CD14-positive monocyte (primary cell): ENCODE measurements at regions of chr3 and their contacts with region 1.

Region 1: DNA sequence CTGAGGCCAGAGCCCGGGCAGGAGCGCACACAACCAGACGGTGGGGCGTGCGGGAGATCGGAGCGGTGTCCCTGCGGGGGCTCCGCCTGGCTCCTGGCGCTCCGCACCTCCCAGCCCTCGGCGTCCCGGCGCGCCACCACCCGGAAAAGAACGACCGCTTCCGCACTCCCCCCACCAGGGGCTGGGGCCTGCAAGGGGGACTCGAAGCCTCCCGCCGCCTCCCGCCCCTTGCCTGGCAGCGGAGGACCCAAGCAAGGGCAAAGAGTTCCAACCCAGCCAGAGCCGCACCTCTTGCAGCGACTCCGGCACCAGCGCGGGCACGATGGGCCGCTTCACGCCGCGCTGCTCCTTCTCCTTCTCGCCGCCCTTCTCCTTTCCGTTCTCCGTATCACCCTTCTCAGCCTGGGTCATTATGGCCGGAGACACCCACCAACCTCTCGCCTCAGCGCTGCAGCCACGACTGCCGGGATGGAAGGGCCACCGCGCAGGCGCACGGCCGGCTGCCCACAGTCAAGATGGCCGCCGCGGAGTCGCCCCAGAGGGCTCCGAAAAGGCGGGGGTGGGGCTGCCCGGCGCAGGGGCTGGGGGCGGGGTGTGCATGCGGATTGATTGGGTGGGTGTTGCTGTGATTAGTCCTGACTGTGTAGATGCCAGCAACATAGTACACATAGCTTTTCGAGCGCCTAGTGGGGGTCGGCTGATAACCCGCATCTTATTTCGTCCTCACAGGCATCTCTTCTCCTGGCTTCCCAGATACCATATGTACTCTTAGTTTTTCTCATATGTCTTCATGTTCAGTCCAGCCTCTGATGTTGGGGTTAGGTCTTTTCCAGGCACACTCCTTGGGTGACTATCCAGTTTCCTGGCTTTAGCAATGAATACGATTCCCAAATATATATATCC is at the start of gene ACTR8:
- DNase-seq: peak; percentile 78 to 83 (median 83)
- H3K4me3 ChIP-seq: peak within 1 kb of the TSS; percentile 87 to 96 (median 91)
- H3K4me3 Mint-ChIP-seq: peak within 1 kb of the TSS; percentile 97 to 100
- H3K27ac ChIP-seq: peak within 1 kb of the TSS; percentile 83 to 84
- H3K27ac Mint-ChIP-seq: peak within 1 kb of the TSS; percentile 92 to 99 (median 96)
- H3K4me1 ChIP-seq: peaks cover 13 to 17% of the 10 kb centered on the region in 2 donors
- H3K4me1 Mint-ChIP-seq: peaks cover 16% of the 10 kb centered on the region
- H3K27me3 ChIP-seq: no peaks in the 10 kb centered on the region
- H3K27me3 Mint-ChIP-seq: peaks cover 0 to 7% (median 2%) of the 10 kb centered on the region in 3 donors
- CTCF ChIP-seq: no peak
- polyA plus RNA-seq, gene ACTR8: 8.3 to 12.2 (median 10.7) TPM

Region 2: DNA sequence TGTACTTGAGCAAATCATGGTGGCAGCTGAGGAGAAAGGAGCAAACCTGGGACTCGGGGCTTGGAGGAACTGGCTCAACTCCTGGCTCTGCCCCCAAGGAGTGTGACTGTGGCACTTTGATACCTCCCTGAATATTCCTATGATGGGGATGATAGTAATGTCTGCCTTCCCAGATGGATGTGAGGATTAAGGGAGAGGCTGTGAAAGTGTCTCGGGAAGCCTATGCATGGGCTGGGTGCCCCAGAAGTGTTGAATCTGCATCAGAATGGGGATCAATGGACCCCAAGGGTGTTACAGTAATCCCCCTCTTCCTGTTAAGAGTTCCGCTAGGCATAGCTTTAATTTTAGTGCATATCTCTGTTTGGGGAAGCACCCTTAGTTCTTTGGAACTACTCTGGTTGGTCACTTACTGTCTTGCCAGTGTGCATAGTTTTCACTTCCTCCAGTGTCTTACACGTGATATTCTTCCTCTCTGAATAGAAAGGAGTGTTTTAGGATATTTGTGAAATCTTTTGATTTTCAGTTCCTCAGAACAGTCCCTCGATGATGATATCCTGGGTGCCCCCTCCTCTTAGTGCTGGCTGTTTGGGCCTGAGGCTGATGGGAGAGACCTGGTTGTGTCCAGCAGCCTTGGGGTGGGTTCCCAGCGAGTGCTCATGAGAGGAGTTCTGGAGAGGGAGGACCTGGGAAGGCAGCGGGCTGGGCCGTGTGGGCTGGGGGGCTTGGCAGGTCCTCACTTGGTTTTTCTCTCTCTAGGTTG is 133.2 kb before region 1 on chr3:
- intact Hi-C with region 1: loop called in 1 of 2 experiments (anchors 10 kb)
- DNase-seq: peak; percentile 86 to 96 (median 95)
- H3K4me3 ChIP-seq: peak overlapping the region in 1 of 3 experiments; percentile 42
- H3K4me3 Mint-ChIP-seq: peak overlapping the region; percentile 64 to 79
- H3K27ac ChIP-seq: peak overlapping the region; percentile 95 to 99
- H3K27ac Mint-ChIP-seq: peak overlapping the region; percentile 99 to 100 (median 100)
- H3K4me1 ChIP-seq: peaks cover 54 to 59% of the 10 kb centered on the region in 2 donors
- H3K4me1 Mint-ChIP-seq: peaks cover 58% of the 10 kb centered on the region
- H3K27me3 ChIP-seq: no peaks in the 10 kb centered on the region
- H3K27me3 Mint-ChIP-seq: peaks cover 1 to 5% (median 2%) of the 10 kb centered on the region in 3 donors
- CTCF ChIP-seq: no peak